Activated CD4-positive, alpha-beta T cell treated with anti-CD3 and anti-CD28 coated beads for 36 hours (primary cell): ENCODE measurements at regions of chr14 and their contacts with region 1.

Region 1: DNA sequence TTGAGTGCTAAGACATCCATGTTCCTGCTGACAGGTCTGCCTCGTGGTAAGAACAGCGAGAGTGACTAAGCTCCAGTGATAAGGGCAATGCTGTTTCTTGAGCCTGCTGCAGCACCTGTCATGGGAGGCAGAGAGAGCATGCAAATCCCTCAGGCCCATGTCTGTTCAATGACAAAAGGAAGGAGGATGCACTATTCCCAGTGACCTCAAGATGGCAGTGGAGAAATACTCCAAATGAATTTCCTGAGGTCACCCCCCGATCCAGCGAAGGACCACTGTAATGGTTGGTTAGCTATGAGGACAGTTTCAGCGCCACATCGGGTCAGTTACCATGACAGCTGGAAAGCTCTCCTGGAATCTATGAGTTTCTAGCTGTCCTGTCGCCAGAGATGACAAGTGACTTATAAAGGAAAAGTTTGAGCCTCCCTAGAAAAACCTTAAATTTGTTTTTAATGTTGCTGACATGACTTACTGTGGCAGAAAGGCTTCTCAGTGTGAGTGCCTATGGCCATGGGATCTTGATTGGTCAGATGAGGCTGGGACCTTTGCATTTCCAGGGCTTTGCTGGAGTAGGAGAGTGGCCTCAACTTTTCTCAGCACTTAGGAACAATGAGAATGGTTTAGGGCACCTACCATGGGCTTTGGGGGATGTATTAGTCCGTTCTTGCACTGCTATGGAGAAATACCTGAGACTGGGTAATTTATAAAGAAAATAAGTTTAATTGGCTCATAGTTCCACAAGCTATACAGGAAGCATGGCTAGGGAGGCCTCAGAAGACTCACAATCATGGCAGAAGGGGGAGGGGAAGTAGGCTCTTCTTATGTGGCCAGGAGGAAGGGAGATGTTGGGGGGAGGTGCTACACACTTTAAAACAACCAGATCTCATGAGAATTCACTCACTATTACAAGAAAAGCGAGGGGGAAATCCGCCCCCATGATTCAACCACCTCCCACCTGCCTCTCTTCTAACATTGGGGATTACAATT is 88.0 kb upstream of the TMEM260 start:
- DNase-seq: peak; percentile 53
- ATAC-seq: peak; percentile 95
- H3K4me3 Mint-ChIP-seq: no peak overlapping the region
- H3K27ac Mint-ChIP-seq: no peak overlapping the region
- H3K4me1 Mint-ChIP-seq: peaks cover 7% of the 10 kb centered on the region
- H3K27me3 Mint-ChIP-seq: peaks cover 2% of the 10 kb centered on the region

Region 2: GRCh38 chr14:56205881-56206280 is 285.7 kb before region 1 on chr14:
- CTCF ChIA-PET with region 1: no interaction called
- POLR2A ChIA-PET with region 1: no interaction called
- intact Hi-C with region 1: no loop called
- DNase-seq: no peak
- ATAC-seq: no peak
- H3K4me3 Mint-ChIP-seq: no peak overlapping the region
- H3K27ac Mint-ChIP-seq: no peak overlapping the region
- H3K4me1 Mint-ChIP-seq: peaks cover 8% of the 10 kb centered on the region
- H3K27me3 Mint-ChIP-seq: no peaks in the 10 kb centered on the region

Region 3: DNA sequence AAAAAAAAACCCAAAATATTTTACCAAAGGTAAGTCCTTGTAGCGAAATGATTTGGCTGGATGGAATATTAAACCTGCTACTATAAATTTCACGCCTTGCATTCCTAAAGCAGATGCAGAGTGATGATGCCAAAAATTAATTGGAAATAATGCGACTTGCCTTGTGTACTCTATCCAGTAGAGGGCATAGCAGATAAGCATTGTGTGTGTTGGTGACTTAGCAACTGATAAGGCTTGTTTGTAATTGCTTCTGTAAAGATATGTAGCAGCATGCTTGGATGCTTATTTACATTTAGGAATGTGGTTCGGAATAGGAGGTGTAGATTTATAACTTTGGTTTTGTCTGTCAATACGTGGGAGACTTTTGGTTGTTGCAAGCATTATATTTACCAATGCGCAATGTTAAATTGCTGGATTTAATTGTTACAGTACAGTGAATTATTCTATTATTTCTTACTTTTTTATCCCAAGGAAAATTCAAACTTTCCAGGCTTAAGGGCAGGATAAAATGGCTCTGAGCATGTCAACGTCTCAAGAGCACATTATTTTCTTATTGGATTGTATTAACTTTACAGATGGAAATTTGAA is 168.5 kb after region 1 on chr14:
- CTCF ChIA-PET with region 1: interaction called, 4 read pairs
- POLR2A ChIA-PET with region 1: no interaction called
- intact Hi-C with region 1: loop called in 1 of 2 experiments (anchors 5 kb)
- DNase-seq: no peak
- ATAC-seq: no peak
- H3K4me3 Mint-ChIP-seq: no peak overlapping the region
- H3K27ac Mint-ChIP-seq: no peak overlapping the region
- H3K4me1 Mint-ChIP-seq: no peaks in the 10 kb centered on the region
- H3K27me3 Mint-ChIP-seq: peaks cover 2% of the 10 kb centered on the region

Region 4: GRCh38 chr14:56808383-56809269 is 317.0 kb after region 1 on chr14:
- CTCF ChIA-PET with region 1: no interaction called
- POLR2A ChIA-PET with region 1: no interaction called
- intact Hi-C with region 1: no loop called
- DNase-seq: no peak
- ATAC-seq: no peak
- H3K4me3 Mint-ChIP-seq: no peak overlapping the region
- H3K27ac Mint-ChIP-seq: no peak overlapping the region
- H3K4me1 Mint-ChIP-seq: peaks cover 26% of the 10 kb centered on the region
- H3K27me3 Mint-ChIP-seq: peaks cover 77% of the 10 kb centered on the region

Region 5: DNA sequence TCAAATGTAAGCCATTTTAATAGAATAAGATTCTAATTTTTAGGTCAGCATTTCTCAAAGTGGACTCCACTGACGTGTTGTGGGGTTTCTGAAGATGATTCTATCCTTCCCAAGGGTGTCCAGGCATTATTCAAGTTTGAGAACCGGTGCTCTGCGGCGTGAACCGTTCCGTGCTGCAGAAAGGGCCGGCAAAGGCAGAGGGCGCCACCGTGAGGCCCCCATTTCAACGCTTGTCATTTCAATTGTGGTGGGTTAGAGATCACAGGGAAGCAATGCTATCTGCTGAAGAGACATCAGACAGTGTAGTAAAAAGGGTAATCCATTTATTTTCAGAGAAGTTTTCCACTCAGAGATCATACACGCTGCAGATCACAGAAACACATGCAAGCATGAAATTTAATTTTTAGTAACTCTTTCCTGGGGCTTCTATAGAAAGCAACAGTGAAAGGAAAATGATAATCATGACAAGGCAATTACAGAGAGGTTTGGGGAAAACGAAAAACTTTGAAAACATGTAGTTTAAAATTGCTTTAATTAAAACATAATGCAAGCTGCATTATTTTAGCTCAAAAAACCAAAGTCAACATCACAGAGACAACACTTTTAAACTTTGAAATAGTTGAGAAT is 575.4 kb after region 1 on chr14:
- CTCF ChIA-PET with region 1: no interaction called
- POLR2A ChIA-PET with region 1: no interaction called
- intact Hi-C with region 1: loop called (anchors 5 kb)
- DNase-seq: peak; percentile 71
- ATAC-seq: peak; percentile 69
- H3K4me3 Mint-ChIP-seq: no peak overlapping the region
- H3K27ac Mint-ChIP-seq: no peak overlapping the region
- H3K4me1 Mint-ChIP-seq: no peaks in the 10 kb centered on the region
- H3K27me3 Mint-ChIP-seq: peaks cover 25% of the 10 kb centered on the region

Region 6: DNA sequence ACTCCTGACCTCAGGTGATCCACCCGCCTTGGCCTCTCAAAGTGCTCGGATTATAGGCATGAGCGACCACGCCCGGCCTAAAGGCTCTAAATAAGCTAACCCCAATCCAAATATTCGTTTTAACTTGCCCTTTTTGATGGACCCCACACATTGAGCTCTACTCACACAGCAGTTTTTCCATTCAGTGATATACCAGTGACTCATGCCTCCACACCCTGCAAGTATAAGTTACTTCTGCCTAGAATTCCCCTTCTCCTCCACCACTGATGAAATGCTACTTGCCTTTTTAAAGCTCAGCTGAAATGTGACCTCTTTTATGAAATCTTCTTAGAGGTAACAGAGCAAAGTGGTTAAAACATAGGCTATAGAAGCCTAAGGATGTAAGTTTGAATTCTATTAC is 708.3 kb after region 1 on chr14:
- CTCF ChIA-PET with region 1: interaction called, 3 read pairs
- POLR2A ChIA-PET with region 1: no interaction called
- intact Hi-C with region 1: loop called in 1 of 2 experiments (anchors 5 kb)
- DNase-seq: no peak
- ATAC-seq: peak; percentile 57
- H3K4me3 Mint-ChIP-seq: no peak overlapping the region
- H3K27ac Mint-ChIP-seq: no peak overlapping the region
- H3K4me1 Mint-ChIP-seq: peaks cover 3% of the 10 kb centered on the region
- H3K27me3 Mint-ChIP-seq: peaks cover 11% of the 10 kb centered on the region

Region 7: DNA sequence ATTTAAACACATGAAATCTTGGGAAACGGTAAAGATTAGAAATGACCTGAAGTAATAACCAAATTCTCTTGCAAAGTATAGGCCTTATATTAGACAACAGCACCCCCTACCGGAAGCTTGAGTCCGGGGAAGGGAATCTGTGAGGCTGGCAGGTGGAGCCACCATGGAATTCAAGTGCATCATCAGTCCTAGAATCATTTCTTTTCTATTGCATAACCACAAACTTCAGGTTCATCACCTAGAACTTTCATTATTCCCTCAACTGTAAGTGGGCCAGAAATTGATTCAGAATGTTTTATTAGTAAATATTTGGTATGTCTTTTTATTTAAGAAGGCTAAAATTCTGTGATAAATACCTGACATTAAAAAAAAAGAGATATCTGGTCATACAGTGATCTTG is 825.7 kb after region 1 on chr14:
- CTCF ChIA-PET with region 1: interaction called, 29 read pairs
- POLR2A ChIA-PET with region 1: no interaction called
- intact Hi-C with region 1: loop called (anchors 1 to 2 kb)
- DNase-seq: peak; percentile 83
- ATAC-seq: peak; percentile 49
- H3K4me3 Mint-ChIP-seq: no peak overlapping the region
- H3K27ac Mint-ChIP-seq: no peak overlapping the region
- H3K4me1 Mint-ChIP-seq: peaks cover 6% of the 10 kb centered on the region
- H3K27me3 Mint-ChIP-seq: no peaks in the 10 kb centered on the region